Activated CD8-positive, alpha-beta T cell treated with anti-CD3 and anti-CD28 coated beads, Interleukin-2, amount 10 ng/mL, durations not matched to agents 7 days and 5 days (primary cell): ENCODE measurements at regions of chr17 and their contacts with region 1.

Region 1: GRCh38 chr17:7744416-7744815 is 26.9 kb downstream of the DNAH2 start:
- DNase-seq: no peak
- ATAC-seq: no peak
- H3K4me3 Mint-ChIP-seq: no peak overlapping the region
- H3K27ac Mint-ChIP-seq: no peak overlapping the region
- H3K4me1 Mint-ChIP-seq: no peaks in the 10 kb centered on the region
- H3K27me3 Mint-ChIP-seq: peaks cover 15% of the 10 kb centered on the region

Region 2: GRCh38 chr17:7632492-7632894 is 111.9 kb before region 1 on chr17:
- CTCF ChIA-PET with region 1: no interaction called
- POLR2A ChIA-PET with region 1: no interaction called
- DNase-seq: peak; percentile 62
- ATAC-seq: no peak
- H3K4me3 Mint-ChIP-seq: no peak overlapping the region
- H3K27ac Mint-ChIP-seq: no peak overlapping the region
- H3K4me1 Mint-ChIP-seq: peaks cover 4% of the 10 kb centered on the region
- H3K27me3 Mint-ChIP-seq: no peaks in the 10 kb centered on the region

Region 3: GRCh38 chr17:7729816-7730215 is 14.6 kb before region 1 on chr17:
- CTCF ChIA-PET with region 1: interaction called, 13 read pairs
- POLR2A ChIA-PET with region 1: no interaction called
- DNase-seq: no peak
- ATAC-seq: no peak
- H3K4me3 Mint-ChIP-seq: no peak overlapping the region
- H3K27ac Mint-ChIP-seq: no peak overlapping the region
- H3K4me1 Mint-ChIP-seq: no peaks in the 10 kb centered on the region
- H3K27me3 Mint-ChIP-seq: peaks cover 26% of the 10 kb centered on the region

Region 4: GRCh38 chr17:7754656-7755055 is 10.2 kb after region 1 on chr17:
- CTCF ChIA-PET with region 1: interaction called, 10 read pairs
- POLR2A ChIA-PET with region 1: no interaction called
- DNase-seq: no peak
- ATAC-seq: no peak
- H3K4me3 Mint-ChIP-seq: no peak overlapping the region
- H3K27ac Mint-ChIP-seq: no peak overlapping the region
- H3K4me1 Mint-ChIP-seq: peaks cover 12% of the 10 kb centered on the region
- H3K27me3 Mint-ChIP-seq: peaks cover 4% of the 10 kb centered on the region

Region 5: GRCh38 chr17:8125157-8125946 is 380.9 kb after region 1 on chr17:
- CTCF ChIA-PET with region 1: no interaction called
- POLR2A ChIA-PET with region 1: no interaction called
- DNase-seq: peak; percentile 90
- ATAC-seq: peak; percentile 35
- H3K4me3 Mint-ChIP-seq: peak overlapping the region; percentile 88
- H3K27ac Mint-ChIP-seq: peak overlapping the region; percentile 88
- H3K4me1 Mint-ChIP-seq: peaks cover 57% of the 10 kb centered on the region
- H3K27me3 Mint-ChIP-seq: peaks cover 44% of the 10 kb centered on the region